SK-N-SH (cell line): ENCODE measurements at regions of chr1 and their contacts with region 1.

Region 1: GRCh38 chr1:145906954-145907753 is 2.7 kb downstream of the ITGA10 start:
- DNase-seq: no peak
- H3K4me3 ChIP-seq: no peak overlapping the region
- H3K27ac ChIP-seq: no peak overlapping the region
- H3K4me1 ChIP-seq: peaks cover 5 to 8% of the 10 kb centered on the region in 2 experiments; a peak in 2 of 4 replicates
- H3K27me3 ChIP-seq: no peaks in the 10 kb centered on the region
- CTCF ChIP-seq: no peak
- EP300 ChIP-seq: no peak
- RAD21 ChIP-seq: no peak

Region 2: GRCh38 chr1:145782166-145783099 is 124.7 kb before region 1 on chr1:
- CTCF ChIA-PET with region 1: no interaction called
- POLR2A ChIA-PET with region 1: no interaction called
- DNase-seq: no peak
- H3K4me3 ChIP-seq: no peak overlapping the region
- H3K27ac ChIP-seq: peak overlapping the region in 1 of 2 experiments; percentile 81; a peak in 2 of 4 replicates
- H3K4me1 ChIP-seq: peaks cover 0 to 13% of the 10 kb centered on the region in 2 experiments; a peak in 1 of 4 replicates
- H3K27me3 ChIP-seq: no peaks in the 10 kb centered on the region
- CTCF ChIP-seq: no peak
- EP300 ChIP-seq: 0 out of 4 replicates have a peak, but pooled peaks of 1 of the 2 experiments have one; percentile 68
- RAD21 ChIP-seq: no peak

Region 3: GRCh38 chr1:145837656-145838055 is 69.5 kb before region 1 on chr1:
- CTCF ChIA-PET with region 1: no interaction called
- POLR2A ChIA-PET with region 1: no interaction called
- DNase-seq: no peak
- H3K4me3 ChIP-seq: no peak overlapping the region
- H3K27ac ChIP-seq: no peak overlapping the region
- H3K4me1 ChIP-seq: no peaks in the 10 kb centered on the region
- H3K27me3 ChIP-seq: no peaks in the 10 kb centered on the region
- CTCF ChIP-seq: no peak
- EP300 ChIP-seq: no peak
- RAD21 ChIP-seq: no peak

Region 4: DNA sequence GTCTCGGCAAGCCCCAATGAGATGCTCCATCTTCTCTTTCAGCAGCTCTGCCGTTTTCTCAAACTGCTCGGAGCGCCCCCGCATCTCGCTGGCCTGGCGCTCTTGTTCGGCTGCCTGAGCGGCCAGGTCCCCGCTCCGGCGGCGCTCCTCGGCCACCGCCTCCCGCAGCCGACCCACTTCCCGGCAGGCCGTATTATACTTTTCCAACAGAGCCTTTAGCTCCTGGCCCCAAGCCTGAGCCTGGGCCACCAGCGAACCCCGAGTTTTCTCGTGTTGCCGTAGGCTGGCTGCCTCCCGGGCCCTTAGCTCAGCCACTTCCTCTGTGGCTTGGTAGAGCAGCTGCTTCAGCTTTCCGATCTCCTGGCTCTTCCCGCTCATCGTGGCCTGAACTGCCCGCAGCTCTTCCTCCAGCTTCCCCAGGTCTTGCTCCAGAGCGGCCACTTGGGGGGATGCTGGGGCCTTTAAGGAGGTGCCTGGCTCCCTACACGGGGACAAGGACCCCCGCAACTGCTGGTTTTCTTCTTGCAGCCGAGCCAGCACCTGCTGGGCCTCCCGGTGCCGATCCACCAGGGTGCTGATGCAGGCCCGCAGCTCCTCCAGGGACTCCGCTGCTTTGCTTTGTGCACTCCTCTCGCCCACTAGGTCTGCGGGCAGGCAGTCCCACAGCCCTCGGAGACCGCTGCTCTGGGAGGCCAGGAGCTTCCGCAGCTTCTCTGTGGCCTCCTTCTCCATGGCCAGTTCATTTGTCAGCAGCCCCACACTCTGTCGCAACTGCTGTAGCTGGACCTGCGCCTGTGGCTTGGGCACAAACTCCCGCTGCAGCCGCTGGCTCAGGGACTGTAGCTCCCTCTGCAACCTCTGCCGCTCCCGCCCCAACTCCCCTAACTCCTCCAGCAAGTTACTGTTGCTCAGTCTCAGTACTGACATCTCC is 34.9 kb before region 1 on chr1:
- CTCF ChIA-PET with region 1: interaction called, 10 read pairs
- POLR2A ChIA-PET with region 1: no interaction called
- DNase-seq: no peak
- H3K4me3 ChIP-seq: no peak overlapping the region
- H3K27ac ChIP-seq: no peak overlapping the region
- H3K4me1 ChIP-seq: no peaks in the 10 kb centered on the region
- H3K27me3 ChIP-seq: no peaks in the 10 kb centered on the region
- CTCF ChIP-seq: no peak
- EP300 ChIP-seq: no peak
- RAD21 ChIP-seq: no peak

Region 5: GRCh38 chr1:145885738-145886287 is 21.3 kb before region 1 on chr1 and contains the start of gene ANKRD35:
- CTCF ChIA-PET with region 1: interaction called, 281 read pairs
- POLR2A ChIA-PET with region 1: no interaction called
- DNase-seq: peak; percentile 95
- H3K4me3 ChIP-seq: peak within 1 kb of the TSS; percentile 60 to 72
- H3K27ac ChIP-seq: no peak within 1 kb of the TSS
- H3K4me1 ChIP-seq: peaks cover 2 to 18% of the 10 kb centered on the region in 2 experiments; a peak in 3 of 4 replicates
- H3K27me3 ChIP-seq: no peaks in the 10 kb centered on the region
- CTCF ChIP-seq: no peak
- EP300 ChIP-seq: no peak
- RAD21 ChIP-seq: no peak
- polyA plus RNA-seq, gene ANKRD35: 0.05 and 0.08 TPM in 2 replicates

Region 6: GRCh38 chr1:145918144-145918992 is 11.2 kb after region 1 on chr1 and contains the start of gene PEX11B:
- CTCF ChIA-PET with region 1: interaction called, 13 read pairs
- POLR2A ChIA-PET with region 1: no interaction called
- DNase-seq: peak; percentile 90
- H3K4me3 ChIP-seq: peak within 1 kb of the TSS; percentile 83 to 86
- H3K27ac ChIP-seq: peak within 1 kb of the TSS; percentile 85 to 95
- H3K4me1 ChIP-seq: peaks cover 0 to 18% of the 10 kb centered on the region in 2 experiments; a peak in 2 of 4 replicates
- H3K27me3 ChIP-seq: no peaks in the 10 kb centered on the region
- CTCF ChIP-seq: no peak
- EP300 ChIP-seq: no peak
- RAD21 ChIP-seq: no peak
- polyA plus RNA-seq, gene PEX11B: 26.1 and 34.5 TPM in 2 replicates

Region 7: GRCh38 chr1:145949219-145949618 is 42.1 kb after region 1 on chr1:
- CTCF ChIA-PET with region 1: no interaction called
- POLR2A ChIA-PET with region 1: no interaction called
- DNase-seq: no peak
- H3K4me3 ChIP-seq: no peak overlapping the region
- H3K27ac ChIP-seq: no peak overlapping the region
- H3K4me1 ChIP-seq: no peaks in the 10 kb centered on the region; a peak in 1 of 4 replicates
- H3K27me3 ChIP-seq: no peaks in the 10 kb centered on the region
- CTCF ChIP-seq: no peak
- EP300 ChIP-seq: no peak
- RAD21 ChIP-seq: no peak